ENCODE measurements at regions of chr1 and their contacts with region 1.

Region 1: GRCh38 chr1:1122078-1122811 is 6.4 kb upstream of the C1orf159 start:
- DNase-seq: peak; percentile 90
- ATAC-seq: peak; percentile 94

Region 2: DNA sequence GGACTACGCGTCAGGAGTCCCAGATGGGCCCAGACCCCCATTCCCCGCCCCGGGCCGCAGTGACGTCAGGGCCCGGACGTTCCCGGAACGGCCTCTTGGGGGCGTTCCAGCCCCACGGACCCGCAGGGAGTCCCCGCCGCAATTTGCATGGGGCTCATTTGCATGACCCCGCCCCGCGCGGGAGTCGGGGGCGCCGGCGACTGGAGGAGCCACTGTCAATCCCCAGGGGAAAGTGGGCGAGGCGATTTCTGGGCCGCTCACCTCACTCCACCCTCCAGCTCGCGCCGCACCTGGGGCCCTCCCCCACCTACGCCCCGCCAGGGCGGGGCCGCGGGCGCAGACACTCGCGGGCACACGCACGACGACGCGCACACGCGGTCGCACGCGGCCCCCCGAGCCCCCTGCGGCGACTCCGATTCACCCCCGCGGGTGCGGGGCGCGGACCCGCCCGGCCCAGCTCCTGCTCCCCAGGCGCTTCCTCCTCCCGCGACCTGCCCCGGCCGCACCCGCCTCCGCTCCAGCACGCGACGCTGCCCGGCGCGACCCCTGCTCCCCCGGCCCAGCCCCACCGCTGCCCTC is 89.1 kb before region 1 on chr1:
- intact Hi-C with region 1: no loop called
- DNase-seq: peak; percentile 80
- ATAC-seq: peak; percentile 88

Region 3: DNA sequence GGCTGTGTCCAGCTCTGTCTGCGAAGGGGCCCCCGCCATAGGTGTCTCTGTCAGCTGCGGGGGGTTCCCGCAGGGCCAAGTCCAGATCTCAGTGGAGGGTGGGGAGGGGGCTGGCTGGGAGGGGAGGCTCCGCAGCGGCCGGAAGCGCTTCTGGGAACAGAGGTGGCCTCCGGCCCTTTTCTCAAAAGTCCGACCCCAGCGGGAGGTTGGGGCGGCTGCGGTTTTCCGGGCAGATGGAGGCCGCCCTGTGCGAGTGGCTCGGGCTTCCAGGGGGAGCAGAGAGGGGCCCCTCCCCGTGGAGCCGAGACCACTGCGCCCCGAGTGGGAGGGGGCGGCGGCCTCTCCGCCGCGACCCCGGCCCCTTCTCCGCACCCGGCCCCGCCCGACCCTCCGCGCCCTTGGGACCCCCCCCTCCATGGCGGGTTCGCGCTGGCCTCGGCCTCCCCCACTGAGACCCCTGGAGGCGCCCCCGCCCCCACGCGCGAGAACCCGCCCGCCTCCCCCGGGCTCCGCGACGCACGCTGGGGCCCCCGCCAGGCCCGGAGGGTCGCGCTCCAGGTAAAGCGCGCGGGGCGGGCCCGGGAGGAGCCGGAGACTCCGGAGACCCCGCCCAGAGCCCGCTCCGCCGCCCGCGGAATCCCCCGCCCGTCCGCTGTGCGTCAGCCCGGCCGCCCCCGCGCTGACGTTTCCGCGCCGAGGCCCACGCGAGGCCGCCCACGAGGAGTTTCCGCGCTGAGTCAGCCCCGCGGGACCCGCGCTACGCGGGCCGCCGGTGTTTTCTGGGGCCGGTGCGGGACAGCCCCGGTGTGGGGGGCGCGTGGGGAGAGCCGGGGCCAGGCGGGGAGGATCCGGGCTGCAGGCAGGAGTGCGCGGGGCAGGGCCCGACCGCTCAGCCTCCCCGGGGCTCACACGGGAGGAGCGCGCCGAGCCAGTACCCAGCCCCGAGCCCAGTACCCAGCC is 78.9 kb after region 1 on chr1:
- intact Hi-C with region 1: no loop called
- DNase-seq: peak; percentile 55
- ATAC-seq: peak; percentile 57

Region 4: DNA sequence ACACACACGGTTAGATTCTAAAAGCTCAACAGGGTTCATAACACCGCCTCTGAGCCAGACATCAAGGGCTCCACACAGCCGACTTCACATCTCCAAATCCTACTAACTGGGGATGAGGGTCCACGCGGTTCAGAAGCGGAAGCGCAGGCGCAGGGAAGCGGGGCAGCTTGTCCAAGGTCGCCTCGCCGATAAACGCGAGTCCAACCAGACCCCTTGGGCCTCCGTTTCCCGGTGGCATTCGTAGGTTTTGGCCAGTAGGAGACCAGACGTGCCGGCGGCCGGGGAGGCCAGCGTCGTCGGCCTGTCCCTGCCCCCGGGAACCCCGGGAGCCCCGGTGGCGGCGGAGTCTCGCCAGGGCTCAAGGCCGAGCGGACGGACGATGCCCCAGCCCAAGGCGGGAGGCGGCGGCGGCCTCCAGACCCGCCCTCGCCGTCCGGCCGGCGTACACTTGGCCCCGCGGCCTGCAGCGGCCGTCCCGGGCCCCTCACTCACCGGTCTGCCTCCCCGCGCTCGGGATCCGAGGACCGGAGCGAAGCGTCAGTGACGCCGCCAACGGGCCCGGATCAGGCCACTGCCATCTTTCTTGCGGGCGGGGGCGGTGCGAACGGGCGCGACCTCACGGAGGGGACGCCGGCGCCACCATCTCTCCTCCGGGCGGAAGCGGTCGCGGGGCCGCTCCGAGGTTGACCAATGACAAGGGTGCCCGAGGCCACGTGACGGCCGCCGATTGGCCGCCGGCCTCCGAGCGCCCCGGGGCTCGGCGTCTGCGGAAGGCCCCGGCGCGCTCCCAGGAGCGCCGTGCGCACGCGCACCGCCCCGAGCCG is 109.4 kb after region 1 on chr1 and contains the start of gene SDF4:
- intact Hi-C with region 1: loop called (anchors 5 kb)
- DNase-seq: peak; percentile 99
- ATAC-seq: peak; percentile 98
- total RNA-seq, gene SDF4: 110 TPM

Region 5: DNA sequence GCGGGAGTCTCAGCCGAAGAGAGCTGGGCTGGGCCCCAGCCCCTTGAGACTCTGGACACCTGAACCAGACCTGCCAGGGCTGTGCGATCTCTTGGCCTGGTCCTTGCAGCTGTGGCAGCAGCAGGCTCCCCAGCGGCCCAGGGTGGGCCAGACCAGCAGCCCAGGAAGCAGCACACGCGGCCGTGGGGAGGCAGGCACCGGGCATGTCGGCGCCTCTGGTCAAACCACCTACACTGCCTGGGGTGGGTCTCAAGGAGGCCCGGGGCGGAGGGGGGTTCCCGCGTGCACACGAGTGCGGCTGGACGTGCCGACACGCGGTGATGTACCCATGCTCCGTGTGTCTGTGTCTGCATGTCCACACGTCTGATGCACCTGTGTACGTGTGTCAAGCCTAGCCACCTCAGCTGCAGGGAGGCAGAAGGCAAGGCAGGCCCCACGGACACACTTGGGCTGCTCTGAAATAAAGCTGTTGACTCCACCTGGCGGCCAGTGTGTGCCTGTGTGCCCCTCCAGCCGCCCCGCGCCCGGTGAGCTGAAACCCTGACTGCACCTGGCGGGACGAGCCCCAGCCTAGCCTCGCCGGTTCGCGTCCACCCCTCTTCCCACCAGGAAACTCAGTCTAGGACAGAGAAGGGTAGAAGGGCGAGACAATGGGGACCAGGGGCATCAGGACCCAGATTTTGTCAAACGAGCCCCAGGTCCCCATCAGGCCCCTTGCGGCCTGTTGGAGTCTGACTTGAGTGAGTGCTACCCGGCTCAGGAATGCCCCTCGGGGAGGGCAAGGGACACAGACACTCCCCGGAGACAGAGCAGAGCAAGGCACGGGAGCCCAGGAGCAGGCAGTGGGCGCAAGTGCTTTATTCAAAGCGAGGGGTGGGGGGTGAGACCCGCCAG is 169.6 kb after region 1 on chr1:
- intact Hi-C with region 1: loop called (anchors 5 kb)
- DNase-seq: peak; percentile 76
- ATAC-seq: peak; percentile 79